T-cell (primary cell): ENCODE measurements at regions of chr5 and their contacts with region 1.

Region 1: DNA sequence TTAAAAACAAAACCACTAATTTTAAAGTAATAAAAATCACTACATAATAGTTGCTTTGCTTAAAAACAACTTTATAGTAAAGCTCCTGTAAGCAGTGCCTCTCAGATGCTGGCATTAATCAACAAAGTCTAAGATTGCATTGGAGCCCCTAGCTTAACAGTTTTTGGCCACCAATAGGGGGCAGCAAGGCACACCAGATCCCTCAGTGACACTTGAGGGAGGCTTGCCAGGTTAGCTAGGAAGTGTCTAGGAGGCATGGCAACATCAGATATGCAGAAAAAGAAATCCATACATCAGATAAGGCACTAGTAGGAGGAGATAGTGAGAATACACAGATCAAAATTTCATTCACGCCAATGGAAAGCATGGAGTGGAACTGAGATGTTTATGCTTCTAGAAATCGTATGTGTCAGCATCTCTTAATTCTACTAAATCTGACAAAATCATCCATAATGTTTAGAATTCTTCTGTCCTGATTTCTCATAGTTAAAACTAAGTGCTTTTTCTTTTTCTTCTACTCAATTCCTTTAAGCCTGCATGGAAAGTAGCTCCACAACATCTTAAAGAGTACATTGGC is 73.6 kb upstream of the PAM start:
- DNase-seq: peak in 29 of 35 experiments; percentile 7 to 70 (median 32)
- ATAC-seq: peak in 3 of 4 experiments; percentile 40 to 52 (median 43)
- H3K4me3 ChIP-seq: no peak overlapping the region
- H3K4me3 Mint-ChIP-seq: no peak overlapping the region
- H3K27ac ChIP-seq: no peak overlapping the region
- H3K27ac Mint-ChIP-seq: no peak overlapping the region
- H3K4me1 ChIP-seq: no peaks in the 10 kb centered on the region
- H3K4me1 Mint-ChIP-seq: no peaks in the 10 kb centered on the region
- H3K27me3 ChIP-seq: no peaks in the 10 kb centered on the region
- H3K27me3 Mint-ChIP-seq: no peaks in the 10 kb centered on the region

Region 2: GRCh38 chr5:102433473-102433872 is 248.0 kb before region 1 on chr5:
- CTCF ChIA-PET with region 1: no interaction called
- POLR2A ChIA-PET with region 1: no interaction called
- DNase-seq: no peak
- ATAC-seq: no peak
- H3K4me3 ChIP-seq: no peak overlapping the region
- H3K4me3 Mint-ChIP-seq: no peak overlapping the region
- H3K27ac ChIP-seq: no peak overlapping the region
- H3K27ac Mint-ChIP-seq: no peak overlapping the region
- H3K4me1 ChIP-seq: no peaks in the 10 kb centered on the region
- H3K4me1 Mint-ChIP-seq: no peaks in the 10 kb centered on the region
- H3K27me3 ChIP-seq: peaks cover 0 to 3% of the 10 kb centered on the region in 2 experiments
- H3K27me3 Mint-ChIP-seq: no peaks in the 10 kb centered on the region

Region 3: GRCh38 chr5:103224118-103224893 is 542.8 kb after region 1 on chr5:
- CTCF ChIA-PET with region 1: interaction called in 1 of 2 experiments, 10 read pairs
- POLR2A ChIA-PET with region 1: no interaction called
- DNase-seq: peak in 24 of 35 experiments; percentile 2 to 67 (median 18)
- ATAC-seq: peak; percentile 83 to 91 (median 88)
- H3K4me3 ChIP-seq: no peak overlapping the region
- H3K4me3 Mint-ChIP-seq: no peak overlapping the region
- H3K27ac ChIP-seq: no peak overlapping the region
- H3K27ac Mint-ChIP-seq: peak overlapping the region in 1 of 2 donors; percentile 6
- H3K4me1 ChIP-seq: peaks cover 0 to 5% of the 10 kb centered on the region in 2 experiments
- H3K4me1 Mint-ChIP-seq: peaks cover 0 to 3% (median 0%) of the 10 kb centered on the region in 3 donors
- H3K27me3 ChIP-seq: peaks cover 0 to 10% of the 10 kb centered on the region in 2 experiments
- H3K27me3 Mint-ChIP-seq: peaks cover 13 to 30% of the 10 kb centered on the region in 2 donors